ENCODE measurements at regions of chr7 and their contacts with region 1.

Region 1: DNA sequence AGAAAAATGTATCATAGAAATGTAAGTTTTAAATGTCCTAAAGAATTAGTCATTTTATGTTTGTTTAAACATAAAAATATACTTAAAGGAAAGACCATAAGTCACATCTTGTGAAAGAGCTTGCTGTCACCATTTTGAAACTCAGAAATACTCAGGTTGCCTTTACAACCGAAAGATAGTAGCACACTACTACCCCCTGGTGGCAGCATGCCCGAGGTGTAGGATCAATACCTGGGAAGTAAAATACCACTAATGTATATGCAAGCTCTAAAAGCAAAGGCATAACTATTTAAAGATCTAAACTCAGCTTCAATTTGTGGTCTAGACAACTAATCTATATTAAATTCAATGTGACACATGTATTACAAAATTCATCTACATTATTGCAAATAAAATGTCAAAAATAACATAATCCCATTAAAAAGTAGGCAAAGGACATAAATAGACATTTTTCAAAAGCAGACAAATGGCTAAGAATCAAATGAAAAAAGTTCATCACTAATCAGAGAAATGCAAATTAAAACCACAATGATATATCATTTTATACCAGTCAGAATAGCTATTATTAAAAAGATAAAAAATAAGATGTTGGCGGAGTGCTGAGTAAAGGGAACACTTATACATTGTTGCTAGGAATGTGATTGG is 47.7 kb upstream of the FGL2 start:
- DNase-seq: no peak
- H3K4me3 ChIP-seq: no peak overlapping the region
- H3K27ac ChIP-seq: no peak overlapping the region
- H3K4me1 ChIP-seq: peaks cover 16 to 52% (median 45%) of the 10 kb centered on the region in 4 donors
- H3K27me3 ChIP-seq: no peaks in the 10 kb centered on the region
- CTCF ChIP-seq: peak; percentile 84 to 87 (median 84)
- EP300 ChIP-seq: no peak
- POLR2A ChIP-seq: no peak

Region 2: GRCh38 chr7:76095908-76096307 is 1151.4 kb before region 1 on chr7:
- intact Hi-C with region 1: no loop called
- DNase-seq: no peak
- H3K4me3 ChIP-seq: no peak overlapping the region
- H3K27ac ChIP-seq: no peak overlapping the region
- H3K4me1 ChIP-seq: no peaks in the 10 kb centered on the region
- H3K27me3 ChIP-seq: peaks cover 0 to 28% (median 0%) of the 10 kb centered on the region in 4 donors
- CTCF ChIP-seq: no peak
- EP300 ChIP-seq: no peak
- POLR2A ChIP-seq: no peak

Region 3: GRCh38 chr7:77331938-77332695 is 84.8 kb after region 1 on chr7:
- intact Hi-C with region 1: loop called (anchors 5 kb)
- DNase-seq: peak; percentile 91
- H3K4me3 ChIP-seq: no peak overlapping the region
- H3K27ac ChIP-seq: peak overlapping the region in 3 of 4 donors; percentile 8 to 79 (median 43)
- H3K4me1 ChIP-seq: peaks cover 29 to 70% (median 62%) of the 10 kb centered on the region in 4 donors
- H3K27me3 ChIP-seq: no peaks in the 10 kb centered on the region
- CTCF ChIP-seq: peak; percentile 71 to 90 (median 77)
- EP300 ChIP-seq: no peak
- POLR2A ChIP-seq: no peak

Measured in esophagus muscularis mucosa (tissue), 4 donors.